ENCODE measurements at regions of chr22 and their contacts with region 1.

Region 1: DNA sequence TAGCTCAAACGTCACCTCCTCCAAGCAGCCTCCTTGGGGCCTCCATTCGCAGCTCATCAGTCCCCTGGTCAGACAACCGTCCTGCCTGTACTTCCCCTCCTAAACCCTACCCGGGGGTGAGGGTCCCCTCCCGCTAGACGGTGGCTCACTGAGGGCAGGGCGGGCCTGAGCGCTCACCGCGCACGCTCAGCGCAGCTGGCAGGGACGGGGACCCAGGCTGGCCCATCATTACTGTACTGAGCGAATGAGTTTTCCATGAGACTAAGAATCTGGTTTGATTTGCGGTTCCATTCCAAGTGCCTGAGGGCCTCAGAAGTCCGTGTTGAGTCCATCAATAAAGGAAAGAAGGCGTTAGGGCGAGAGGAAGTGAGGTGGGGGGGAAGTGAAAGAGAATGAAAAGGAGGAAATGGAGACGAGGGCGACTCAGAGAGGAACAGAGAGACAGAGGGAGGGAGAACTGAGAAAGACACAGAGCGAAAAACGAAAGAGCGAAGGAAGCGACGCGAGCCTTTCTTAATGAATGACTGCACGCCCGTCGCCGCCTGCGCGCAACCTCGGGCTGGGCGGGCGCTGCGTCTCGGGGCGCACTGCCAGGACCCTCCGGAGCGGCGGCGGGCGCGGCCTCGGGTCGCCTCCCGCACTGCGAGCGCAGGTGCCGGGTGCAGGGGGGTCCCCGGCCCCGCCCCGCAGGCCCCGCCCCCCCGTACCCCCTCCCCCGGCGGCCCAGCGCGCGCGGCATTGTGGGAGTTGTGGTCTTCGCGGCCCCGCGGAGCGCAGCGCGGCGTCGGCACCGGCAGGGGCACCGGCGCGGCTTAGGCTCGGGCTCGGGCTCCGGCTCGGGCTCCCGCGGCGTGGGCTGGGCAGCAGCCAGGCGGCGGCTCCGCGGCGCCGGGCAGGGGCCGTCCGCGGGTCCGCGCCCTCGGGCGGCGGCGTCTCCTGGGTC is at the start of gene ASPHD2:
- DNase-seq: peak; percentile 94
- H3K4me3 Mint-ChIP-seq: peak within 1 kb of the TSS; percentile 94
- H3K27ac Mint-ChIP-seq: peak within 1 kb of the TSS; percentile 97
- H3K4me1 Mint-ChIP-seq: peaks cover 49% of the 10 kb centered on the region
- H3K27me3 Mint-ChIP-seq: peaks cover 9% of the 10 kb centered on the region
- total RNA-seq, gene ASPHD2: 19.4 and 20.7 TPM in 2 replicates

Region 2: GRCh38 chr22:26393929-26394328 is 34.9 kb before region 1 on chr22:
- intact Hi-C with region 1: no loop called
- DNase-seq: no peak
- H3K4me3 Mint-ChIP-seq: no peak overlapping the region
- H3K27ac Mint-ChIP-seq: no peak overlapping the region
- H3K4me1 Mint-ChIP-seq: peaks cover 2% of the 10 kb centered on the region
- H3K27me3 Mint-ChIP-seq: peaks cover 12% of the 10 kb centered on the region

Region 3: DNA sequence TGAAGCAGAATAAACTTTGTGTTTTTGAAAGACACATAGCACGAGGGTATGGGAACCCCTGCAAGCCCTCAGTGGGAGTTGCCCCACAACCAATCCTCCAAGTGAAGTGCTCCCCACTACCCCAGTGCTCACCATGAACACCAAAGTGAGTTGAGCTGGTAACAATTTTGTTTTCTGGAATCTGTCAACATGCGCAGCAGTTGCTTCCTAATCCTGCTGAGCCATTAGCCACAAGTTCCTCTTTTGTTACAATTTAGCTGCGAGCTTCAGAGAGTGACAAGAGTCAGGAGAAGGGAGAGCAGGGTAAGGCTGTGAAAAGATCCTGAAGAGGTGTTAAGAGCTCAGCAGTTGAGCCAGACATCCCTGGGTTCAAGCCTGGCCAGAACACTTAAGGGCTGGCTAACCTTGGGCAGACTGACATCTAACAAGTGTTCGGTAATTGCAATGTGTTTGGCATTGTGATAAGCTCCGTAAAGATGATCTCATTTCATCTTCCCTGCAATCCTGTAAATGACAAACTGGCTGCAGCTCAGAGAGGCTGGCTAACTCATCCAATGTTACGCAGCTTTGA is 23.9 kb before region 1 on chr22:
- intact Hi-C with region 1: loop called (anchors 2 kb)
- DNase-seq: no peak
- H3K4me3 Mint-ChIP-seq: peak overlapping the region; percentile 11
- H3K27ac Mint-ChIP-seq: no peak overlapping the region
- H3K4me1 Mint-ChIP-seq: peaks cover 12% of the 10 kb centered on the region
- H3K27me3 Mint-ChIP-seq: peaks cover 13% of the 10 kb centered on the region

Region 4: DNA sequence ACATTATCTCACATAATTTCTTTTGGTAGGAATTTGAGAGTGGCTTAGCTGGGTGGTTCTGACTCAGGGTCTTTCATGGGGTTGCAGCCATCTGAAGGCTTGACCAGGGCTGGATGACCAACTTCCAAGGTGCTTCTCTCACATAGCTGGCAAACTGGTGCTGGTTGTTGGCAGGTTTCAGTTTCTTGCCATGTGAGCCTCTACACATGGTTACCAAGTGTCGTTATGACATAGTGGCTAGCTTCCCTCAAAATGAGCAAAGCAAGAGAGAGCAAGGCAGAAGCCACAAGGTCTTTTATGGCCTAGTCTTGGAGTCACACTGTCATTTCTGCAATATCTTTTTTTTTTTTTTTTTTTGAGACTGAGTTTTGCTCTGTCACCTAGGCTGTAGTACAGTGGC is 87.7 kb after region 1 on chr22:
- intact Hi-C with region 1: no loop called
- DNase-seq: no peak
- H3K4me3 Mint-ChIP-seq: no peak overlapping the region
- H3K27ac Mint-ChIP-seq: no peak overlapping the region
- H3K4me1 Mint-ChIP-seq: peaks cover 22% of the 10 kb centered on the region
- H3K27me3 Mint-ChIP-seq: no peaks in the 10 kb centered on the region

Region 5: DNA sequence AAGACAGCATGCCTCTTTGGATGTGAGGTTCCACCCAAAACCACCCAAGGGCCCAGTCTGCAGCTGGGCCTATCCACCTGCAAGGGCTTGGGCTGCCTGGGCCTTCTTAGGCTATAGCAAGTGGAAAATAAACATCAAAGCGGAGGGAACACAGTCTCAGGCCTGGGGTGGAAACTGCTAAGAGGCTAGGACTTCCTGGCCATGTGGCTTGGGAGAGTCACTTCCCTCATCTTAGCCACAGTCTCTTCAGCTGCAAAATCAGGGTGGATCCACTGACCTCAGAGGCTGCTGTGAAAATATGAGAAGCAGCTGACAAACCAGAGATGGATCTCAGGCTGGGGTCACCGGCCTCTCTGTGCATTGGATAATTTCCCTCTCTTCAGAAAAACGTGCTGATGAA is 114.0 kb after region 1 on chr22:
- intact Hi-C with region 1: no loop called
- DNase-seq: peak; percentile 76
- H3K4me3 Mint-ChIP-seq: no peak overlapping the region
- H3K27ac Mint-ChIP-seq: peak overlapping the region; percentile 85
- H3K4me1 Mint-ChIP-seq: peaks cover 40% of the 10 kb centered on the region
- H3K27me3 Mint-ChIP-seq: no peaks in the 10 kb centered on the region

Region 6: GRCh38 chr22:26665813-26666231 is 237.0 kb after region 1 on chr22:
- intact Hi-C with region 1: loop called (anchors 2 kb)
- DNase-seq: no peak
- H3K4me3 Mint-ChIP-seq: peak overlapping the region; percentile 29
- H3K27ac Mint-ChIP-seq: peak overlapping the region; percentile 90
- H3K4me1 Mint-ChIP-seq: peaks cover 59% of the 10 kb centered on the region
- H3K27me3 Mint-ChIP-seq: no peaks in the 10 kb centered on the region

Region 7: GRCh38 chr22:26672590-26673468 is 244.0 kb after region 1 on chr22:
- intact Hi-C with region 1: loop called (anchors 2 kb)
- DNase-seq: peak; percentile 98
- H3K4me3 Mint-ChIP-seq: peak overlapping the region; percentile 95
- H3K27ac Mint-ChIP-seq: peak overlapping the region; percentile 96
- H3K4me1 Mint-ChIP-seq: peaks cover 67% of the 10 kb centered on the region
- H3K27me3 Mint-ChIP-seq: no peaks in the 10 kb centered on the region

Measured in activated CD4-positive, alpha-beta T cell treated with anti-CD3 and anti-CD28 coated beads, Interleukin-2, amount 10 ng/mL, durations not matched to agents 24 days and 14 days (primary cell).